ENCODE measurements at regions of chr10 and their contacts with region 1.

Region 1: GRCh38 chr10:58064714-58065528 is 202.8 kb downstream of the IPMK start:
- DNase-seq: peak in 1 of 5 donors; percentile 12
- H3K4me3 ChIP-seq: no peak overlapping the region
- H3K27ac ChIP-seq: no peak overlapping the region
- H3K4me1 ChIP-seq: no peaks in the 10 kb centered on the region
- H3K27me3 ChIP-seq: no peaks in the 10 kb centered on the region
- CTCF ChIP-seq: peak in 2 of 3 donors; percentile 26 to 48
- EP300 ChIP-seq: no peak
- POLR2A ChIP-seq: no peak

Region 2: DNA sequence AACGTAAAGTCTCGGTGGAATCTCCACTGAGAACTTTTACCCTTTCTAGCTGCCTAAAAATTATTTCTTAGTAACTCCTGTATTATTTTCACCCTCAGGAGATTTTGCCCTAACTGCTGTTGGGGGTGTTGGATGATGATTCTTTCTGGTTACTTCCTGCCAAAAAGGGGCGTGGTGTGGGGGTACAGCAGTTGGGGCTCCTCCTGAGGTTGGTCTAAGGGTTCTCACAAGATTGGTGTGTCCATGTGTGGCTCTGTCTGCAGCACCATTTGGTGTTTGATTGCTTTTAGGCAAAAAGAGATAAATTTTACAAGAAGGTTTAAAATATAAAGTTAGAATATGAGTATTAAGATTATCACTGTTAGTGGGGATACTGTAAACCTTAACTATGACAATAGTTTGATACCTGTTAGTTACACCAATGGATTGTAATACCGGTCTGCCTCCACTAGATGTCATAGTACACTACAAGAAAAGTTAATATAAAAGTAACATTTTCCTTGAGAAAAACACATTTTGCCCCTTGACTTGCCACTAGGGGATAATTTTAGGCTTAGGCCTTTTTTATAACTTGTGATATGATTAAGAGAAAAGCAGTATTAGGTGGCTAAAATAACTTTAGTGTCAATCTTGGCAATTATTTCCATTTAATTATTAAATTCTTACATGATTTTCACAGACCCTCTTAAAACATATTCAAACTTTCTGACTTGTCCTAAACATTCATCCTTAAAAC is 725.9 kb before region 1 on chr10:
- intact Hi-C with region 1: loop called in 2 of 4 experiments (anchors 10 kb)
- DNase-seq: no peak
- H3K4me3 ChIP-seq: no peak overlapping the region
- H3K27ac ChIP-seq: no peak overlapping the region
- H3K4me1 ChIP-seq: no peaks in the 10 kb centered on the region
- H3K27me3 ChIP-seq: no peaks in the 10 kb centered on the region
- CTCF ChIP-seq: peak in 2 of 3 donors; percentile 43 to 46
- EP300 ChIP-seq: no peak
- POLR2A ChIP-seq: no peak